Psoas muscle (tissue), 8 donors: ENCODE measurements at regions of chr6 and their contacts with region 1.

Region 1: GRCh38 chr6:160348142-160349019 is at the start of gene SLC22A3:
- DNase-seq: peak; percentile 68 to 74
- ATAC-seq: peak; percentile 68 to 77 (median 71)
- H3K4me3 ChIP-seq: peak within 1 kb of the TSS; percentile 85
- H3K27ac ChIP-seq: peak within 1 kb of the TSS; percentile 76
- H3K4me1 ChIP-seq: no peaks in the 10 kb centered on the region
- H3K27me3 ChIP-seq: peaks cover 0 to 27% (median 0%) of the 10 kb centered on the region in 3 donors
- CTCF ChIP-seq: peak; percentile 27
- total RNA-seq, gene SLC22A3: 45.4 to 91.9 (median 54.8) TPM

Region 2: GRCh38 chr6:159693128-159693893 is 655.1 kb before region 1 on chr6 and contains the start of gene SOD2:
- intact Hi-C with region 1: no loop called
- DNase-seq: peak; percentile 91 to 94
- ATAC-seq: peak; percentile 81 to 86 (median 82)
- H3K4me3 ChIP-seq: peak within 1 kb of the TSS; percentile 99
- H3K27ac ChIP-seq: peak within 1 kb of the TSS; percentile 97
- H3K4me1 ChIP-seq: peaks cover 51% of the 10 kb centered on the region
- H3K27me3 ChIP-seq: no peaks in the 10 kb centered on the region
- CTCF ChIP-seq: no peak
- total RNA-seq, gene SOD2: 573 to 7,738 (median 3,937) TPM

Region 3: GRCh38 chr6:160279850-160280249 is 68.5 kb before region 1 on chr6:
- intact Hi-C with region 1: loop called in 1 of 2 experiments (anchors 5 kb)
- DNase-seq: no peak
- ATAC-seq: no peak
- H3K4me3 ChIP-seq: no peak overlapping the region
- H3K27ac ChIP-seq: no peak overlapping the region
- H3K4me1 ChIP-seq: peaks cover 6% of the 10 kb centered on the region
- H3K27me3 ChIP-seq: no peaks in the 10 kb centered on the region
- CTCF ChIP-seq: no peak